ENCODE measurements at regions of chr1 and their contacts with region 1.

Region 1: DNA sequence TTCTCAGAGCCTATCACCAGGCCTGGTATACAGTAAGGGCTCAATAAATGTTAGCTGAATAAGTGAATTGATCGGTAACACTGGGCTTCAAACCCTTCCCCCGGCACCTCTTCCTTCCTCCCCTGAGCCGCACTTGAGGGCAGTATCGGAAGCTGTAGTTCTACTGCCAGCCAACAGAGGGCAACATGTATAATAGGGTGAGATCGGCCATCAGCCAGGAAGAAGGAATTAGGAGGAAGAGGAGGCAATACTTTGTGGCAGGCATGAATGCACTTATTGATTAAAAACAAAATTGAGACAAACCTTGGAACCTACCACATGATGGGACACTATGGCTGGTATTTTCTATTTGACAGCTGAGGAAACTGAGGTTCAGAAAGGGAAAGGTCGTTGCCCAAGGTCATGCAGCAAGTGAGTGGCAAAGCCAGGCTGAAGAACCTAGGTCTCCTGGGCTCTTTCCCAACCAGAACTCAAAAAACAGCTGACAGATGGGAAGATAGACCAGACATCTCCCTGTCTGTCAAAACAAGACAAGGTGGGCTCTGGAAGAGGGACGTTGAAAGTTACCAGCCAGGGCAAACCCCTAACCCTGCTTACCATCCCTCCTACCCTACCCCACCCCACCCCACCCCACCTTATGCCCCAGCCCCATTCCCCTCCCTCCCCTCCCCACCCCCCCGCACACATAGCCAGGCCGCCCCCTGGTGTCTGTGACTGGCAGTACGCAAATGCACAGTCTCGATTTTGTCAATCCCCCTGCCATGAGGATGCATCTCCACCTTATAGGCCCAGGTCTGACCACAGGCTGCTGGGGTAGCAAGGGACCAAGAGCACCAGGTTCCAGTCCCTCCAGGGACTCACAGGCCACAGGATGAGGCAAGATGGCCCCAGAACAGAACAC is 107.3 kb upstream of the RUNX3 start:
- DNase-seq: peak; percentile 84
- H3K4me3 Mint-ChIP-seq: peak overlapping the region; percentile 13
- H3K27ac Mint-ChIP-seq: peak overlapping the region; percentile 71
- H3K4me1 Mint-ChIP-seq: peaks cover 28% of the 10 kb centered on the region
- H3K27me3 Mint-ChIP-seq: peaks cover 3% of the 10 kb centered on the region

Region 2: DNA sequence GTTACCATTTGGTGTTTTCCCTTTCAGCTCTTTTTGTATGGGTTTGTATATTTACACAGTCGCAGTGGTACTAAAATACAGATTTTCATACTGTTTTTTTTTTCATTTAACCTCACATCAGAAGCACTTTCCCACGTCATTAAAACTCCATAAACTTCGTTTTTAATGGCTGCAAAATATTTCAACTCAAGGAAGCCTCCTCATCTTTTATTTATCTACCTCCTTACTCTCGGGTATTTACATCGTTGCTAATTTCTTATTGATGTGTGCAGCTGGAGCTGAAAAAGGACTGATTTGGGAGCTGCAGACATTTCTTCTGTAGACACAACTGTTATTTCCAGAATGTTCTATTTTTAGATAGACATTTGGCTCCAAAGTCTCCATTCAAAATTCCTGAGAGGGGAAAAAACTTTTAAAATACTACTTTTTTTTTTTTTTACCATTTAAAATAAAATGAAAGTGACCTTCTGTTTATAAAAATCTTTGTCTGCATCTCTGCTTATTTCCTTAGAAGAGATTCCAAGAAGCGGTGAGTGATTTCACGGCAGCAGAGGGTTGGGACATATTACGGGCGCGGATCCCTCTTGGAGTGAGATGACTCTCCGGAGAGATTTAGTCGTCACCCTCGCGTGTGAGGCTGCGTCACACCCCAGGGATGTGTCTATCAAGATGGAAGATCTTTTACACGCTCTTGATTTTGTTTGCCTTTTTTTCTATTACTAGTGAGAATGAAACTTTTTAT is 117.5 kb before region 1 on chr1:
- CTCF ChIA-PET with region 1: interaction called, 290 read pairs
- POLR2A ChIA-PET with region 1: interaction called, 5 read pairs
- intact Hi-C with region 1: loop called (anchors 1 kb)
- DNase-seq: peak; percentile 93
- H3K4me3 Mint-ChIP-seq: peak overlapping the region; percentile 50
- H3K27ac Mint-ChIP-seq: peak overlapping the region; percentile 98
- H3K4me1 Mint-ChIP-seq: peaks cover 89% of the 10 kb centered on the region
- H3K27me3 Mint-ChIP-seq: no peaks in the 10 kb centered on the region

Region 3: GRCh38 chr1:24946861-24947658 is 90.4 kb before region 1 on chr1:
- CTCF ChIA-PET with region 1: interaction called, 39 read pairs
- POLR2A ChIA-PET with region 1: interaction called, 3 read pairs
- intact Hi-C with region 1: no loop called
- DNase-seq: peak; percentile 43
- H3K4me3 Mint-ChIP-seq: no peak overlapping the region
- H3K27ac Mint-ChIP-seq: peak overlapping the region; percentile 10
- H3K4me1 Mint-ChIP-seq: peaks cover 41% of the 10 kb centered on the region
- H3K27me3 Mint-ChIP-seq: no peaks in the 10 kb centered on the region

Region 4: GRCh38 chr1:24973315-24973714 is 64.1 kb before region 1 on chr1:
- CTCF ChIA-PET with region 1: interaction called, 11 read pairs
- POLR2A ChIA-PET with region 1: no interaction called
- intact Hi-C with region 1: no loop called
- DNase-seq: no peak
- H3K4me3 Mint-ChIP-seq: no peak overlapping the region
- H3K27ac Mint-ChIP-seq: no peak overlapping the region
- H3K4me1 Mint-ChIP-seq: peaks cover 45% of the 10 kb centered on the region
- H3K27me3 Mint-ChIP-seq: no peaks in the 10 kb centered on the region

Region 5: DNA sequence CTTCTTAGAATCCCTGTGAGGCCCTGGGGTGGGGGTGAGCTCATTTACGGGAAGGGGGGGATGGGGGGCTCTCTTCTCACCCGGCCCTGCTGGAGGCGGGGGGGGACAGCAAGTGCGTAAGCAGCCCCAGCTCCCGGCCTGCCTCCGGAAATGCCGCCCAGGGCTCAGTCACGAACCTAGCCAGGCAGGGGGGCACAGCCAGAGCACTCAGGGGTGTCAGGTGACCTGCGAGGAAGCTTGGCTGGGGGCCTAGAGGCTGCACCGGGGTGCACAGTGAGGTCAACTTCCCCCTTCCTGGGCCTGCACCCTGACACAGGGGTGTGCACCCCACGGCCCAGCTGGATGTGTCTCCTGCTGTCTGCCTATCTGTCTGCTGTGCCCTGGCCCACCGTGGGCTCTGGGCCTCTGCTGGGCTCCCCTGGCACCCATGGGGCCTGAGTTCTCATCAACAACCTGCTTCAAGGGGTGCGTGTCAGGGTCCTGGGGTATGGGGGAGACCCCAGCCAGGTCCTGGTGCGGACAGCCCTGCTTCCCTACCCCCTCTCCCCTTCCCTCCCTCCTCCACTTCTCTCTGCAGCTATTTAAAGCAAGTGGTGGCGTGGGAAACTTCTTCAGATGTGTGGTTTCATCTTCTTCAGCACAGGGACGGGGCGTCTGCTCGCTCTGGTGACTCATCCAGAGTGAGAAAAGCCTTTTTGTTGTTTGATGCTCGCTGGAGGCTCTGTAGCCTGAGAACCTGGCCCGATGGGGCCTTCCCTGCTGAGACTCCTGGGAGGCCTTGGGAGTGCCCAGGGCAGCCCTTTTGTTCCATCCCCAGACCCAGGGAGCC is 14.8 kb before region 1 on chr1:
- CTCF ChIA-PET with region 1: interaction called, 97 read pairs
- POLR2A ChIA-PET with region 1: interaction called, 8 read pairs
- intact Hi-C with region 1: loop called (anchors 2 kb)
- DNase-seq: peak; percentile 97
- H3K4me3 Mint-ChIP-seq: peak overlapping the region; percentile 77
- H3K27ac Mint-ChIP-seq: peak overlapping the region; percentile 97
- H3K4me1 Mint-ChIP-seq: peaks cover 84% of the 10 kb centered on the region
- H3K27me3 Mint-ChIP-seq: no peaks in the 10 kb centered on the region

Region 6: GRCh38 chr1:25080294-25081209 is 43.1 kb after region 1 on chr1:
- CTCF ChIA-PET with region 1: no interaction called
- POLR2A ChIA-PET with region 1: no interaction called
- intact Hi-C with region 1: no loop called
- DNase-seq: no peak
- H3K4me3 Mint-ChIP-seq: no peak overlapping the region
- H3K27ac Mint-ChIP-seq: no peak overlapping the region
- H3K4me1 Mint-ChIP-seq: no peaks in the 10 kb centered on the region
- H3K27me3 Mint-ChIP-seq: no peaks in the 10 kb centered on the region

Region 7: DNA sequence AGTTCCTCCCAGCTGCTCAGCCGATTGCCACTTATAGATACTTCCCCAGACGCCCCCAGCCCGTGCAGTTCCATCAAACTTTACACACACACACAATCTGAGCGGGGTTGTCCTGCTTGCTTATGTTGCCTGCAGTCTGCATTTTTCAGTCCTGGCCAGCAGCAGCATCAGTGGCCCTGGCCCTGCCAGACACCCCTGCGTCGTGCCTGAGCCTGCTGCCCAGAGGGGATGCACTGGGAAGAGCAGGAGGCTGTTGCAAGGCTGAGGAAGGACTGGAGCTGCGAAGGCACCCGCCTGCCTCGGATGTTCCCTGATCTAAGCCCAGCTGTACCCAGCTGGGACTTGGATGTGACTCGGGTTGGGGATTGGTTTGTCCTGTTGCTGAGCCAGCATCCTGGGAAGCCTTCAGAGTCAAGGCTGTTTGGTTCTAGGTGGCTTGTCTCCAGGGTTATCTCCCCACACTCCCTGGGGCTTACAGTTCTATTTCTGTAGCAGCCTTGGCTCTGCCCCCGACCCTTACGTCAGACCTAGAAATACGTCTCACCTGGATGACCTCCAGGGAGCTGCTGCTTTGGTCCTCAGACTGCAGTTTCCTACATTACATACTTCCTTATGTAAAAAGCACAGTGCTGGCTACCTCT is 621.5 kb after region 1 on chr1:
- CTCF ChIA-PET with region 1: no interaction called
- POLR2A ChIA-PET with region 1: no interaction called
- intact Hi-C with region 1: no loop called
- DNase-seq: no peak
- H3K4me3 Mint-ChIP-seq: no peak overlapping the region
- H3K27ac Mint-ChIP-seq: no peak overlapping the region
- H3K4me1 Mint-ChIP-seq: peaks cover 5% of the 10 kb centered on the region
- H3K27me3 Mint-ChIP-seq: no peaks in the 10 kb centered on the region

Measured in activated CD4-positive, alpha-beta memory T cell treated with anti-CD3 and anti-CD28 coated beads for 36 hours (primary cell).